ENCODE measurements at regions of chr18 and their contacts with region 1.

Region 1: GRCh38 chr18:9614401-9615279 is at the start of gene PPP4R1:
- DNase-seq: peak; percentile 53 to 92 (median 82)

Region 2: GRCh38 chr18:9102508-9103375 is 511.9 kb before region 1 on chr18 and contains the start of gene NDUFV2:
- intact Hi-C with region 1: loop called (anchors 10 kb)
- DNase-seq: peak; percentile 84 to 99 (median 97)

Region 3: GRCh38 chr18:9136315-9137155 is 478.1 kb before region 1 on chr18 and contains the start of gene ANKRD12:
- intact Hi-C with region 1: loop called (anchors 10 kb)
- DNase-seq: peak; percentile 91 to 99 (median 98)

Region 4: DNA sequence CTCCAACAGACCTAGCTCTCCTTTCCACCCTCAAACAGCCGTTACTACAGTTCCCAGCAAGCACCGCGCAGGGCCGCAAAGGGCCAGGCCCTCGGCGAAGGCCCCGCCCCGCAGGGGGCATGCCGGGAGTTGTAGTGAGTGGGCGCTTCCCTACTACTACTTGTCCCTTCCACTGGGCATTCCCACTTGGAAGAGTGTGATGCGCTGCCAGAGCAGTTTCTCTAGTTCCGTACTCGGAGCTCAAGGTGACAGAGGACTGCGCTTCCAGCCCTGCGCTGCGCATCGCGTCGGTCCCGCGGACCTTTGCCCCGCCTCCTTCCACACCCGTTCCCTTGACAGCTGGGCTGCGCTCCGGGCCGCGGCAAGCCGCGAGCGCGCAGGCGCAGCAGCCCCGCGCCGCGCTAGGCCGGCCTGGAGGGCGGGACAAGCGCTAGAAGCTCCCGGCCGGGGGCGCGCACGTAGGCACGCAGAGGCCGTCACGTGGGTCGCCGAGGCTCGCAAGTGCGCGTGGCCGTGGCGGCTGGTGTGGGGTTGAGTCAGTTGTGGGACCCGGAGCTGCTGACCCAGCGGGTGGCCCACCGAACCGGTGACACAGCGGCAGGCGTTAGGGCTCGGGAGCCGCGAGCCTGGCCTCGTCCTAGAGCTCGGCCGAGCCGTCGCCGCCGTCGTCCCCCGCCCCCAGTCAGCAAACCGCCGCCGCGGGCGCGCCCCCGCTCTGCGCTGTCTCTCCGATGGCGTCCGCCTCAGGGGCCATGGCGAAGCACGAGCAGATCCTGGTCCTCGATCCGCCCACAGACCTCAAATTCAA is 299.1 kb after region 1 on chr18 and contains the start of gene VAPA:
- intact Hi-C with region 1: loop called (anchors 5 kb)
- DNase-seq: peak; percentile 93 to 99 (median 98)